HEK293 (cell line): ENCODE measurements at regions of chr3 and their contacts with region 1.

Region 1: DNA sequence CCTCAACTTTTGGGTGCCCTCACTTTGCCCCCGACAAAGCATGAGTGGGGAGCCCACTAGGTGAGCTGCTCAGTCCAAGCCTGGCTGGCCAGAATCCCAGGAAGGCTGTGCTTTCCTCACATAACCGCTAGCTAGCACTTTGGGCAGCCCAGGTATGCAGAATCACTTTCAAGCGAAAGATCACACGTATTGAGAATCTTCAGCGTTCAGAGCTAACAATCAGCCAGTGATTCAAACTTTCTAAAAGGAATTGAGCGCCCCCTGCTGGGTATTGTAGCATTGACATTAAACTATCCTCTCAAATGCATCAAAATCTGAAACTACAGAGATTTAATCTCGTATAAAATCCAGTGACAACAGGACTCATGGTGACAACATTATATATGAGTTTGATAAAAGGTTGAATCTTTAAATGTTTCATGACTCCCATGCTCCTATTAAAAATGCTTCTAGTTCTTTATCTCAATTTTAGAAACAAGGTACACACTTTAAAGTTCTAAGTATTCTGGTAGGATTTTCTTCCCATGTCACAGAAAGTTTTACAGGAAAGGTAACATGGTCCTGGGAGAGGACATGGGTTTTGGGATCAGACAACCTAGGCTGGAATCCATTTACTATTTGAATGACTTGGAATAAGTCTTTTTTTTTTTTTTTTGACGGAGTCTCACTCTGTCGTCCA is 11.8 kb downstream of the ANAPC13 start:
- H3K4me3 ChIP-seq: no peak overlapping the region
- H3K27ac ChIP-seq: no peak overlapping the region
- H3K4me1 ChIP-seq: no peaks in the 10 kb centered on the region
- CTCF ChIP-seq: peak; percentile 40; the same call in 1 of the 2 replicates

Region 2: DNA sequence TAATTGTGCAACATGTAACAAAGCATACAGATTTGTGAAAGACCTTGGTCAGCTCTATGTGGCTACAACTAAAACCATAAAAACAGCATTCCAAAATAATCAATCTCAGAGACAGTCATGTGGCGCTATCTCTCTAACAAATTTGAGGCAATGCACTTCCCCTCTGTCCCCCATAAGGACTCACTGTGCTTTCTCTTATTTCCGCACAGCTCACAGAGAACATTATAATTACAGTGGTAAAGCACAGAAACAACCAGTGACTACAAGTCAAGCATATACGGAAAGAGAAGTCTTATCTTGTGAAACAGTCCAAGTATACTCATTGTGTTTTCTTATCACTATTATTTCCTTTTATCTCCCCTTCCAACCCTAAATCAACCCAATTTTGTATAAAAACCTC is 287.6 kb before region 1 on chr3:
- CTCF ChIA-PET with region 1: no interaction called
- POLR2A ChIA-PET with region 1: no interaction called
- H3K4me3 ChIP-seq: no peak overlapping the region
- H3K27ac ChIP-seq: no peak overlapping the region
- H3K4me1 ChIP-seq: no peaks in the 10 kb centered on the region
- CTCF ChIP-seq: no peak

Region 3: DNA sequence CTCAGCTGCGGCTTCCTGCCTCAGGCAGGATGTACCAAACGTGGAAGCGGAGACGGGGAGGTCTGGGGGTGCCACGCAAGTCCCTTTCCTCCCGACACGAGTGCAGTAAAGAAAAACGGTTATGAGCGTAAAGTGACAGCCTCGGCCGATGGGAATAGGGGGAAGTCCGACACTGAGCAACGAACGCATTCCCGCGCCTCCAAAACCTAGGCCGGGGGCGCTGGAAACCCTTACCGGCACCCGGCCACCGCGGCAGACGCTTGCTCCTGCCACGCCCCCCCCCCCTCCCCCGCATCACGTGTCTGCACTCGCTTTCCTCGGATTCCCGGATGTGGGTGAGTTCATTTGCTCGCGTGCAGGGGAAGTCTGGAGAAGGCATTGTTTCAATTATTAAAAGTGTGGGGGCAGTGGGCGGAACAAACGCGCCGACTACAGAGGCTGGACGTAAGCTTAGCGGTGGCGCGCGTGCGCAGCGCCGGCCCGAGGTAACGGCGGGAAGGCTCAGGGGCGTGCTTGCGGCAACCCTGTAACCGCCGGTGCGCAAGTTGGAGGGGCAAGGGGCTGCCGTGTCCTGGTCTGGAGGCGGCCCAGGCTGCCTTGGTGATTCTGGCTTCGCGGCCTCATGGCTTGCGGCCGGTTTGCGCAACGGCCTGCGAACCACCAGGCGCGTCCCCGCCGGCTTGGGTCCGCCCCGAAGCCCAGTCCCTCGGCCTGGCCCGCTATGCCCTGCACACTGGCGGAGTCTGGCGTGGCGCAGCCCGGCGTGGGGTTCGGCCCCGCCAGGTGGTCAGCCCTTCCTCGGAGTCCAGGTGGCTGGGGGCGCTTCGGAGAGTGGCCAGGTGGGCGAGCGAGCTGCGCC is 11.9 kb after region 1 on chr3 and contains the starts of genes ANAPC13 and CEP63:
- CTCF ChIA-PET with region 1: interaction called, 15 read pairs
- POLR2A ChIA-PET with region 1: interaction called, 5 read pairs
- H3K4me3 ChIP-seq: peak within 1 kb of the TSS; percentile 60
- H3K27ac ChIP-seq: peak within 1 kb of the TSS; percentile 89
- H3K4me1 ChIP-seq: no peaks in the 10 kb centered on the region
- CTCF ChIP-seq: no peak; the same call in 1 of the 2 replicates